ENCODE measurements at regions of chr15 and their contacts with region 1.

Region 1: DNA sequence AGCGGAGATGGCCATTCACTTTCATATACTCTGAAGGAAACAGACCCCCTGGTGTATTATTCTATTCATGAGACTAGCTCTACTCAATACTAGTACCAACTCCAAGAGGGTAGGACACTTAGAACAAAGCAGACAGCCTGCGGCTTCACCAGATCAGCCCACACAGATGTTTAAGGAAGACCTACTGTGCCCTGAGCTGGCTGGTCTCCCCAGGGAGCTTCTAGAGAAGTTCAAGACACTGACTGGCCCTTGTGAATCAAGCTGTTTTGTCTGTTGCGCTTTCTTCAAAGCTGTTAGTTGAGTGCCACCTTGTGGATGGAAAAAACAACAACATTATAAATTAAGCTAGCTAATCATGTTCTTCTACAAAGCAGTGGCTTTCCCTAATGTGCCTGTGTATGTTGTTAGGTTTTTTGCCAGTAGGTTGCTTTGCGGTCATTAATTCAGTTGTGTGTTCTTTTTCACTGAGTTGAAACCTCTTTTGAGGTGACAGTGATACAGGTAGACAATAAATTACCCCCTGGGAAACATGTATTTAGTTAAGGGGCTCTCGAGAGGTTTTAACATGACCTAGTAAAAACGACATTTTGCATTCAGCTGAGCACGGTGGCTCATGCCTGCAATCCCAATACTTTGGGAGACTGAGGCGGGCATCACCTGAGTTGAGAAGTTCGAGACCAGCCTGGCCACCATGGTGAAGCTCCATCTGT is 64.2 kb upstream of the MYZAP start:
- DNase-seq: peak; percentile 50
- H3K4me3 ChIP-seq: no peak overlapping the region
- H3K27ac ChIP-seq: no peak overlapping the region
- H3K4me1 ChIP-seq: no peaks in the 10 kb centered on the region
- H3K27me3 ChIP-seq: no peaks in the 10 kb centered on the region
- CTCF ChIP-seq: peak; percentile 60 to 77 (median 65)
- POLR2A ChIP-seq: no peak

Region 2: DNA sequence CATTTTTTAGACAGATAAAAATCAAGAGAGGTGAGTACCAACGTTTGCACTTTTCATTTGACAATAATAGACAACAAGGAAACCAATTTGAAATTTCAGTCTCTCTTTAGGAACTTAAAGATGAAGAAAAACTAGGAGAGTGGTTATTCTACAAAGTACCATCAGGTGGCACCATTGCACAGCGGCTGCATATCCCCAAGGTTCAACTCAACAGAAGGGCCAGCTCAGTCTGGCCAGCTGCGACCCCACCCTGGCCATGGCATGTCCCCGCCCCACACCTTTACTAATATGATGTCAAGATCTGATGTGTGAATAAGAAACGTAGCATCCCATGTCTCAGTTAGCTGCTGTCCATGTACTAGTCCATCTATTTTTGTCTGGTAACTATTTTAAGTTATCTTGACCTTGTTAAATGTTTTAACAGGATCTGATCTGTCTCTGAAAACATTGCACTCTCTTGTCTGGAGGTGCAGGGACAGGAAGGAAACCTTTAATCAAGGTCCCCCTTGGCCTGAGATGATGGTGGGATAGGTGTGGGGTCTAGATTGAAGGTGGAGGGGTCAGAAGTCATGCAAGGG is 186.8 kb before region 1 on chr15:
- intact Hi-C with region 1: loop called (anchors 5 kb)
- DNase-seq: peak; percentile 57
- H3K4me3 ChIP-seq: no peak overlapping the region
- H3K27ac ChIP-seq: no peak overlapping the region
- H3K4me1 ChIP-seq: peaks cover 11% of the 10 kb centered on the region
- H3K27me3 ChIP-seq: no peaks in the 10 kb centered on the region
- CTCF ChIP-seq: peak; percentile 70 to 86 (median 74)
- POLR2A ChIP-seq: no peak

Region 3: DNA sequence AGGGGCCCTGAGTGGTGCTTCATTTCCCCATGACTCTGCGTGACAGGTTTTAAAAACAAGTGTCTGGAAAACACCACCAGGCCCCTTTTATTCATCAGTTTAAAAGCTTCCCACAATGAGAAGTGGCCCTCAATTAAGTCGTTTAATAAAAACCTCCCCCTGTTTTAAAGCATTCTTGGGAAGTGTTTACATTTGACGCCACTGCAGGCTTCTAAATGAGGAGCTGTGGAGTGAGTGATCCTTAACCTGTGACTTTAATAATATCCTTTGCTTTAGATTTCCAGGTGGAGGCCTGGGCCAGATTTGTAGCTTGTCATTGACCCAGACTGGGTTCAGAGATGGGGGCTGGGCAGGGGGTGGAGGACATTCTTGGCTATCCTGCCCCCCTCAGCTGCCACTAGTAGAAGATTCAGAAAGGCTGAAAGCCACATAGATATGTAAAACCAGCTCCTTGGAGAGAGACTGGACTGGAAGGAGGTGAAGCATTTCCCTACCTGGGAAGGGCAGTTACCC is 139.9 kb before region 1 on chr15:
- intact Hi-C with region 1: loop called (anchors 5 kb)
- DNase-seq: no peak
- H3K4me3 ChIP-seq: no peak overlapping the region
- H3K27ac ChIP-seq: peak overlapping the region in 1 of 2 donors; percentile 70
- H3K4me1 ChIP-seq: peaks cover 51% of the 10 kb centered on the region
- H3K27me3 ChIP-seq: no peaks in the 10 kb centered on the region
- CTCF ChIP-seq: no peak
- POLR2A ChIP-seq: no peak